Upper lobe of right lung (tissue), 1 donor: ENCODE measurements at regions of chr3 and their contacts with region 1.

Region 1: DNA sequence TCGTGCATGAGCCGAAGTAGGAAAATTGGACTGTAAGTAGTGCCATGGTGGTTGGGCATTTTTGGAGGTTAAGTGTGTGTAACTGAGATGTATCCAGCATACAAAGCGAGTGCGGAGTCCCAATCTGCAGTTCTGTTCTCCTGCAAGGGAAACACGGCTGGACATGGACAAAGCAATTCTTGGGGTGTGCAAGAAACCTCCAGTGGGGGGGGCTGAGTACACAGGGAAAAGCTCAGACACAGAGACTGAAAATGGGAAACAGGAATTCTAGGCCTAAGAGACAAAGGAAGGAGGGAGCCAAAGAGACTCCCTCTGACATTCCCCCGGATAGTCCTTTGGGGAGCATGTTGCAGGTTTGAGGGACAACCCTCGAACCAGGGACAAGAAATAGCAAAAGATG is 83.2 kb upstream of the PLSCR4 start:
- DNase-seq: no peak
- ATAC-seq: no peak
- H3K4me3 ChIP-seq: no peak overlapping the region
- H3K27ac ChIP-seq: no peak overlapping the region
- H3K4me1 ChIP-seq: no peaks in the 10 kb centered on the region
- H3K27me3 ChIP-seq: no peaks in the 10 kb centered on the region
- CTCF ChIP-seq: no peak

Region 2: GRCh38 chr3:146065573-146066006 is 268.6 kb before region 1 on chr3:
- intact Hi-C with region 1: loop called (anchors 10 kb)
- DNase-seq: no peak
- ATAC-seq: no peak
- H3K4me3 ChIP-seq: no peak overlapping the region
- H3K27ac ChIP-seq: no peak overlapping the region
- H3K4me1 ChIP-seq: no peaks in the 10 kb centered on the region
- H3K27me3 ChIP-seq: no peaks in the 10 kb centered on the region
- CTCF ChIP-seq: peak; percentile 81

Region 3: GRCh38 chr3:146544002-146544928 is 210.1 kb after region 1 on chr3 and contains the start of gene PLSCR1:
- intact Hi-C with region 1: no loop called
- DNase-seq: peak; percentile 97
- ATAC-seq: peak; percentile 97
- H3K4me3 ChIP-seq: peak within 1 kb of the TSS; percentile 80
- H3K27ac ChIP-seq: peak within 1 kb of the TSS; percentile 97
- H3K4me1 ChIP-seq: peaks cover 33% of the 10 kb centered on the region
- H3K27me3 ChIP-seq: no peaks in the 10 kb centered on the region
- CTCF ChIP-seq: no peak
- total RNA-seq, gene PLSCR1: 165 TPM